H1 (cell line): ENCODE measurements at regions of chr17 and their contacts with region 1.

Region 1: DNA sequence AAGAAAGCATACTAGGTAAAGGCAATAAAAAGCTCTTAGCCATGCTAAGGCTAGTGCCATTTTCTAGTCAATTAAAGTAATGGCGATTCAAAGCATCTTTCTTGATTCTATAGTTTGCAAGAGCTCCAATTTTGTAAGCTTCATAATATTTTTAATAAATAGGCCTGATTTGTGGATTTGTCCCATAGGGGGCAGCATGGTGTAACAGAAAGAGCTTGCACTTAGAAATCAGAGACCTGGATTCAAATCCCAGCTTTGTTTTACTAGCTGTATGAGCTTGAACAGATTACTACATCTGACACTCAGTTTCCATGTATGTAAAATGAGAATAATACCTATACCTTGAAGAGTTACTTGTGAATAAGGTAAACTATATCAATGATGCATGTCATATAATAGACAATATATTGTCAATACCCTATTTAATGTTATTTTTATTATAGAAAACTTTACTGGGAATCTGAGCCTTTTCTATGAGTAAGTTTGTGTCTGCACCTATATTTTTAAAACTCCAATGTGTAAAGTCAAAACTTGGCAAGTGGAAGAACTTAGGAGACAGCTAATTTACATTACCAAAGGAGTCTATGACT is 93.6 kb upstream of the NOG start:
- DNase-seq: no peak
- H3K4me3 ChIP-seq: no peak overlapping the region
- H3K27ac ChIP-seq: no peak overlapping the region
- H3K4me1 ChIP-seq: no peaks in the 10 kb centered on the region
- H3K27me3 ChIP-seq: no peaks in the 10 kb centered on the region
- CTCF ChIP-seq: peak in 2 of 3 experiments; percentile 39 to 56; a peak in 2 of 4 replicates
- EP300 ChIP-seq: no peak
- POLR2A ChIP-seq: no peak
- RAD21 ChIP-seq: peak; percentile 76 to 80

Region 2: GRCh38 chr17:56486732-56487131 is 13.2 kb before region 1 on chr17:
- CTCF ChIA-PET with region 1: interaction called, 17 read pairs
- POLR2A ChIA-PET with region 1: no interaction called
- DNase-seq: no peak
- H3K4me3 ChIP-seq: no peak overlapping the region
- H3K27ac ChIP-seq: no peak overlapping the region
- H3K4me1 ChIP-seq: no peaks in the 10 kb centered on the region
- H3K27me3 ChIP-seq: peaks cover 0 to 1% (median 0%) of the 10 kb centered on the region in 4 experiments; a peak in 1 of 7 replicates
- CTCF ChIP-seq: no peak
- EP300 ChIP-seq: no peak
- POLR2A ChIP-seq: no peak
- RAD21 ChIP-seq: no peak

Region 3: GRCh38 chr17:56510554-56511342 is 10.9 kb after region 1 on chr17:
- CTCF ChIA-PET with region 1: interaction called, 13 read pairs
- POLR2A ChIA-PET with region 1: no interaction called
- DNase-seq: no peak
- H3K4me3 ChIP-seq: no peak overlapping the region
- H3K27ac ChIP-seq: no peak overlapping the region
- H3K4me1 ChIP-seq: no peaks in the 10 kb centered on the region
- H3K27me3 ChIP-seq: no peaks in the 10 kb centered on the region
- CTCF ChIP-seq: peak in 1 of 3 experiments; percentile 12; a peak in 1 of 4 replicates
- EP300 ChIP-seq: no peak
- POLR2A ChIP-seq: no peak
- RAD21 ChIP-seq: no peak; a peak in 1 of 4 replicates

Region 4: GRCh38 chr17:56543294-56543693 is 43.4 kb after region 1 on chr17:
- CTCF ChIA-PET with region 1: no interaction called
- POLR2A ChIA-PET with region 1: no interaction called
- DNase-seq: no peak
- H3K4me3 ChIP-seq: no peak overlapping the region
- H3K27ac ChIP-seq: no peak overlapping the region
- H3K4me1 ChIP-seq: peaks cover 0 to 4% (median 2%) of the 10 kb centered on the region in 4 experiments; a peak in 4 of 7 replicates
- H3K27me3 ChIP-seq: no peaks in the 10 kb centered on the region
- CTCF ChIP-seq: no peak
- EP300 ChIP-seq: no peak
- POLR2A ChIP-seq: no peak
- RAD21 ChIP-seq: no peak

Region 5: GRCh38 chr17:56581635-56582627 is 82.0 kb after region 1 on chr17:
- CTCF ChIA-PET with region 1: interaction called, 13 read pairs
- POLR2A ChIA-PET with region 1: no interaction called
- DNase-seq: no peak
- H3K4me3 ChIP-seq: no peak overlapping the region
- H3K27ac ChIP-seq: no peak overlapping the region
- H3K4me1 ChIP-seq: peaks cover 2 to 6% (median 4%) of the 10 kb centered on the region in 4 experiments; a peak in 4 of 7 replicates
- H3K27me3 ChIP-seq: no peaks in the 10 kb centered on the region
- CTCF ChIP-seq: no peak
- EP300 ChIP-seq: no peak
- POLR2A ChIP-seq: no peak
- RAD21 ChIP-seq: no peak

Region 6: DNA sequence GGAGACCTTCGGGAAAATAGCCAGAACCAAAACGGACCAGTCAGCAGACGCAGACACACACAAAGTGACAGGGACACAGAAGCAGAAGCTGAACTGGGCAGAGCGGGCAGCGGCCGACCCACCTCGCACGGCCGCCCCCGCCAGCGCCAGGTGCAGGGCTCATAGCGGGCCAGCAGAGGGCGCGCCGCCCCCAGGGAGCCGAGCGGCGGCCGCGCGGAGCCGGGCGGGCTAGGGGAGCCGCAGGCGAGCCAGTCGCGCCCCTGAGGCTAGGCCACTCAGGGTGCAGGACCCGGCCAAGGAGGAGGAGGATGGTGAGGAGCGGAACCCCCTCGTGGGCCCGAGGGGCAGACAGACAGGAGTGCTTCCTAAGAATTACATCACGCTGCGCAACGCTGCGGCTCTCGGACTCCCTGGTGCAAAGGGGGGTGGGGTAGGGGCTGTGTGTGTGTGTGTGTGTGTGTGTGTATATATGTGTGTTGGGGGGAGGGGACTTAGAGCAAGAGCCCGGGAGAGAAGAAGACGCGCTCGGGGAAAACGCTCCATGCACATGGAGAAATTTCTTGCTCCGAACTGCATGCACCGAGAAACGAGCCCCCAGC is 92.7 kb after region 1 on chr17:
- CTCF ChIA-PET with region 1: interaction called, 15 read pairs
- POLR2A ChIA-PET with region 1: interaction called, 3 read pairs
- DNase-seq: peak in 1 of 2 experiments; percentile 93
- H3K4me3 ChIP-seq: peak overlapping the region; percentile 39 to 75 (median 66)
- H3K27ac ChIP-seq: no peak overlapping the region
- H3K4me1 ChIP-seq: peaks cover 0 to 11% (median 4%) of the 10 kb centered on the region in 4 experiments; a peak in 5 of 7 replicates
- H3K27me3 ChIP-seq: peaks cover 12 to 49% (median 36%) of the 10 kb centered on the region in 4 experiments
- CTCF ChIP-seq: peak; percentile 86 to 96 (median 87)
- EP300 ChIP-seq: 0 out of 3 replicates have a peak, but pooled peaks of 1 of the 2 experiments have one; percentile 20
- POLR2A ChIP-seq: no peak
- RAD21 ChIP-seq: peak; percentile 74 to 93

Region 7: GRCh38 chr17:56638591-56639051 is 138.7 kb after region 1 on chr17:
- CTCF ChIA-PET with region 1: no interaction called
- POLR2A ChIA-PET with region 1: no interaction called
- DNase-seq: no peak
- H3K4me3 ChIP-seq: no peak overlapping the region
- H3K27ac ChIP-seq: no peak overlapping the region
- H3K4me1 ChIP-seq: peaks cover 0 to 2% (median 0%) of the 10 kb centered on the region in 4 experiments; a peak in 1 of 7 replicates
- H3K27me3 ChIP-seq: no peaks in the 10 kb centered on the region; a peak in 1 of 7 replicates
- CTCF ChIP-seq: no peak
- EP300 ChIP-seq: no peak
- POLR2A ChIP-seq: no peak
- RAD21 ChIP-seq: no peak